Ascending aorta (tissue), 2 donors: ENCODE measurements at regions of chr4 and their contacts with region 1.

Region 1: DNA sequence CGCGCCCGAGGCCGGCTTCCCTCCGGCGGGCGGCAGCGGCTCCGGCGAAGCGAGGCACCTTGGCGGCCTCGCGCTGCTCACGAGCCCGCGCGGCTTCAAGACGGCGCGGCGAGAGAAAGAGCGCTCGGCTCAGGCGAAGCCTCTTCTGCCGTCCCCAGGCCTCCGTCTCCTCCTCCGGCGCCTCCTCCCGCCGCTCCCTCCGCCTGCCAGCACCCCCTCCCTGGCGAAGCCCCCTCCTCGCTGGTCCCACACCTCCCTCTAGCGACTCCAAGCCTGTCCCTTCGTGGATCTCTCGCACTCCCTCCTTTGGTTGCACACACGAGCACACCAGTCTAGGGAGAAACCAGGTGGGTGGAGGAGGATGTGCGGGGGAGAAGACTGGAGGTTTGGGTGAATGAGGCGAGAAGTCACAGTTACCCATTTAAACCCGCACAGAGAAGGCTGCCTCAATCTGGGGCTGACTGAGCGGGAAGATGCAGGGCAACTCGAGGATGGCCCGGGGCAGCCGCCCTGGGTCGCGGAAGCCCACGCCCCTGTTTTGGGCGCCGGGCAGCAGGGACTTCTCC is at the start of gene CAMK2D:
- DNase-seq: peak; percentile 60 to 92
- H3K4me3 ChIP-seq: peak within 1 kb of the TSS; percentile 80 to 93
- H3K27ac ChIP-seq: peak within 1 kb of the TSS; percentile 97 to 99
- H3K4me1 ChIP-seq: peaks cover 0 to 16% of the 10 kb centered on the region in 2 donors
- H3K27me3 ChIP-seq: no peaks in the 10 kb centered on the region
- CTCF ChIP-seq: peak; percentile 69 to 89 (median 69)
- total RNA-seq, gene CAMK2D: 23.8 TPM

Region 2: GRCh38 chr4:113468165-113469022 is 293.3 kb before region 1 on chr4:
- intact Hi-C with region 1: loop called (anchors 1 kb)
- DNase-seq: peak; percentile 91 to 98
- H3K4me3 ChIP-seq: peak overlapping the region in 1 of 2 donors; percentile 43
- H3K27ac ChIP-seq: peak overlapping the region; percentile 91 to 92
- H3K4me1 ChIP-seq: peaks cover 8 to 20% of the 10 kb centered on the region in 2 donors
- H3K27me3 ChIP-seq: no peaks in the 10 kb centered on the region
- CTCF ChIP-seq: no peak

Region 3: DNA sequence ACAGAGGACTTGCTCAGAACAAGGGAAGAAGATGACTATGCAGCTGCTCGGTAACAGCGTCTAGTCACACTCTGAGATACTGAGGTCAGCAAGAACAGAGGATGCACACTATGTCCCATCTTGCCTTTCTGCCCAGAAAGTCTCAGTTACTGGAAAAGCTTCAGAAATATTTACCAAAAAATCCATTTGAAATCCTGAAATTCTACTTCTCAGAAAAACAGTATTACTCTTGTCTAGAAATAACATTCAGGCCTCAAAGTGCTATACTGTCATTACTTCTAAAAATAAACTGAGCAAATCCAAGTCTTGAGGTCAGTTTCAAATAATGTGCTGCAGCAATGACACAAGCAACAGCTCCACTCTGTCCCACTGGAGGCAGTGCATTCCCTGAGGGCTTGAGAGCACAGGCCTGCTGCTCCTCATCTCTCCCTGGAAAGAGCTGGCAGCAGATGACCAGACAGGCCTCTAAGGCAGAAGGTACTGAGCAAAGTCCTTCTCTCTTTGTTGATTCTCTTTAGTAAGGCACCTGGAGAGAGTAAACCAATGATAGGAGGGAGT is 77.1 kb before region 1 on chr4:
- intact Hi-C with region 1: loop called (anchors 2 kb)
- DNase-seq: peak; percentile 17 to 85
- H3K4me3 ChIP-seq: no peak overlapping the region
- H3K27ac ChIP-seq: peak overlapping the region; percentile 38 to 90
- H3K4me1 ChIP-seq: peaks cover 16 to 19% of the 10 kb centered on the region in 2 donors
- H3K27me3 ChIP-seq: no peaks in the 10 kb centered on the region
- CTCF ChIP-seq: peak; percentile 45 to 60 (median 55)

Region 4: DNA sequence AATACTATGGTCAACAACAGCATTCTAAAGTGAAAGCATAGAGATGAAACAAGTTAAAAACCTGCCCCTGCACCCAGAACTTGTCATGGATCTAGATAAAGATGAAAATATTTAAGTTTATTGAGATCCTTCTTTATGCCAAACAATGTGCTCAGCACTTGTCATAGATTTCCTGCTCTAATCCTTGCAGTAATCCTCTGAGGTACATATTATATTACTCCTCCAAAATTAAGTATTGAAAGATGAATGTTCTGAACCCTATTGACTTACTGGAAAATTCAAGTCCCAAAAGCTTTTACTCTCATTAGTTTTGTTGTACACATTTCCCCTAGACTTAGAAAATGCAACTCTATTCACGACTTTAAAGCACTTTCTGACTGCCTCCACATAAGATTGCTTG is 35.7 kb before region 1 on chr4:
- intact Hi-C with region 1: no loop called
- DNase-seq: no peak
- H3K4me3 ChIP-seq: no peak overlapping the region
- H3K27ac ChIP-seq: no peak overlapping the region
- H3K4me1 ChIP-seq: no peaks in the 10 kb centered on the region
- H3K27me3 ChIP-seq: no peaks in the 10 kb centered on the region
- CTCF ChIP-seq: no peak

Region 5: GRCh38 chr4:113945906-113946305 is 184.2 kb after region 1 on chr4:
- intact Hi-C with region 1: no loop called
- DNase-seq: no peak
- H3K4me3 ChIP-seq: no peak overlapping the region
- H3K27ac ChIP-seq: peak overlapping the region in 1 of 2 donors; percentile 32
- H3K4me1 ChIP-seq: peaks cover 0 to 13% of the 10 kb centered on the region in 2 donors
- H3K27me3 ChIP-seq: no peaks in the 10 kb centered on the region
- CTCF ChIP-seq: no peak

Region 6: GRCh38 chr4:113979148-113979904 is 217.6 kb after region 1 on chr4 and contains the start of gene ARSJ:
- intact Hi-C with region 1: loop called (anchors 2 kb)
- DNase-seq: peak; percentile 11 to 85
- H3K4me3 ChIP-seq: peak within 1 kb of the TSS; percentile 74 to 80
- H3K27ac ChIP-seq: peak within 1 kb of the TSS; percentile 92 to 94
- H3K4me1 ChIP-seq: peaks cover 0 to 17% of the 10 kb centered on the region in 2 donors
- H3K27me3 ChIP-seq: no peaks in the 10 kb centered on the region
- CTCF ChIP-seq: no peak
- total RNA-seq, gene ARSJ: 14.6 TPM